ENCODE measurements at regions of chr10 and their contacts with region 1.

Region 1: GRCh38 chr10:119737827-119738226 is 12.0 kb downstream of the INPP5F start:
- DNase-seq: peak in 1 of 35 experiments; percentile 15
- ATAC-seq: peak; percentile 31 to 56 (median 50)
- H3K4me3 ChIP-seq: no peak overlapping the region
- H3K4me3 Mint-ChIP-seq: peak overlapping the region in 1 of 3 donors; percentile 56
- H3K27ac ChIP-seq: no peak overlapping the region
- H3K27ac Mint-ChIP-seq: peak overlapping the region; percentile 50 to 62
- H3K4me1 ChIP-seq: peaks cover 0 to 7% of the 10 kb centered on the region in 2 experiments
- H3K4me1 Mint-ChIP-seq: peaks cover 27 to 41% (median 37%) of the 10 kb centered on the region in 3 donors
- H3K27me3 ChIP-seq: no peaks in the 10 kb centered on the region
- H3K27me3 Mint-ChIP-seq: no peaks in the 10 kb centered on the region

Region 2: GRCh38 chr10:119750391-119751230 is 12.8 kb after region 1 on chr10:
- CTCF ChIA-PET with region 1: interaction called in 1 of 2 experiments, 11 read pairs
- POLR2A ChIA-PET with region 1: no interaction called
- DNase-seq: peak in 34 of 35 experiments; percentile 13 to 74 (median 44)
- ATAC-seq: peak; percentile 82 to 88 (median 84)
- H3K4me3 ChIP-seq: no peak overlapping the region
- H3K4me3 Mint-ChIP-seq: no peak overlapping the region
- H3K27ac ChIP-seq: no peak overlapping the region
- H3K27ac Mint-ChIP-seq: peak overlapping the region; percentile 76 to 78
- H3K4me1 ChIP-seq: no peaks in the 10 kb centered on the region
- H3K4me1 Mint-ChIP-seq: peaks cover 7 to 15% (median 11%) of the 10 kb centered on the region in 3 donors
- H3K27me3 ChIP-seq: no peaks in the 10 kb centered on the region
- H3K27me3 Mint-ChIP-seq: no peaks in the 10 kb centered on the region

Region 3: DNA sequence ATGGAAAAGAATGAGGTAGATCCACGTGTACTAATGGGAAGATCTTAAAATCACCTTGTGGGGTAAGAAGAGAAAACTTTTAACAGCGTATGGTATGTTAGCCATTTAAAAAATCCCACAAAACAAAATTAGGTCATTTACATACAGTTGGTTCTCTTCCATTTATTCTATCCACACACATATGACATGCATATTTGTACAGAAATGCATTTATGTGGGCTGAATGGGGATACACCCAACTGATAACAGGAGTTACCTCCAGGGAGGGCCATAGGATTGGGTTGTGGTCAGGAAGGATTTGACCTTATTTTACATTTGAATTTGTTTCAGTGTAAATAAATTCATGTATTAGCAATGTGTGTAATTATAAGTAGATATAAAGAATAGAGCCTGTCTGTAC is 63.3 kb after region 1 on chr10:
- CTCF ChIA-PET with region 1: interaction called in 1 of 2 experiments, 16 read pairs
- POLR2A ChIA-PET with region 1: interaction called in 1 of 2 experiments, 3 read pairs
- DNase-seq: no peak
- ATAC-seq: no peak
- H3K4me3 ChIP-seq: no peak overlapping the region
- H3K4me3 Mint-ChIP-seq: no peak overlapping the region
- H3K27ac ChIP-seq: no peak overlapping the region
- H3K27ac Mint-ChIP-seq: no peak overlapping the region
- H3K4me1 ChIP-seq: no peaks in the 10 kb centered on the region
- H3K4me1 Mint-ChIP-seq: peaks cover 0 to 8% (median 6%) of the 10 kb centered on the region in 3 donors
- H3K27me3 ChIP-seq: no peaks in the 10 kb centered on the region
- H3K27me3 Mint-ChIP-seq: no peaks in the 10 kb centered on the region

Measured in T-cell (primary cell).